PC-3 (cell line): ENCODE measurements at regions of chr15 and their contacts with region 1.

Region 1: DNA sequence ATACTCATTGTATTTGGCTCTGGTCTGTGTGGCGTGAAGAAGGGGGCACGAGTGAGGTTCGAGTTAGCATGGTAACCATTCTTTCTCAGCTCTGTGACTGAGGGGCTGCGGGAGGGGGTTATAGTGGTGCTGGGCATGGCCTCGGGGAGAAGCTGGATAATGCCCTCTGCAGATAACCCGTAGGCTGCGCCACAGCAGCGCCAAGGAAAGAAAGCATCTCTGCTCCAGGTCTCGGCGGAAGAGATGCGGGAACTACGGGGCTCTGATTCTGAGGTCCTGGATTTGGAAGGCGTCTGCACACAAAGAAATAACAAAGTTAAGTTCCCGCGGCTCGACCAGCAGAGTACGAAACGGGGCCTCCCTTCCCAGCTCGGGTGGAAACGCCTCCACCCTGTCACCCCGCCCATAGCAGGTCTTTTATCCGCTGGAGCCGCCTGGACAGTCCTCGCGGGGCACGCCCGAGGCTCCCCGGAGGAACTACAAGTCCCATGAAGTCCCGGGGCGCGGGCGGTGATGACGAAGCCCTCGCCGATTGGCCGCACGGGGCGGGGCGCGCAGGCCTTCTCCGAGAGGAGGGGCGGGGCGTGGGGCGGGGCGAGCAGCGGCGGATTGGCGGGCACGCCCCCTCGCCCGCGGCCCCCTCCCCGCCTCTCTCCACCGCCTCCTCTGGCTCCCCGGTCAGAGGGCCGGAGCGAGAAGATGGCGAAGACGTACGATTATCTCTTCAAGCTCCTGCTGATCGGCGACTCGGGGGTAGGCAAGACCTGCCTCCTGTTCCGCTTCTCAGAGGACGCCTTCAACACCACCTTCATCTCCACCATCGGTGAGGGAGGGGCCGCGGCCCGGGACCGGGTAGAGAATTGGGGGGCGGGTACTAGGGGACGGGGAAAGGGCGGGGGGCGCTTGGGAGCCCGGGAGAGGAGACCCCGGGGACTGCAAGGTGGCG is at the start of gene RAB8B:
- DNase-seq: peak; percentile 91
- ATAC-seq: peak; percentile 97
- H3K4me3 ChIP-seq: peak within 1 kb of the TSS; percentile 89
- H3K27ac ChIP-seq: no peak within 1 kb of the TSS
- H3K4me1 ChIP-seq: peaks cover 36% of the 10 kb centered on the region
- H3K27me3 ChIP-seq: no peaks in the 10 kb centered on the region
- CTCF ChIP-seq: no peak
- total RNA-seq, gene RAB8B: 6.2 and 8.5 TPM in 2 replicates

Region 2: DNA sequence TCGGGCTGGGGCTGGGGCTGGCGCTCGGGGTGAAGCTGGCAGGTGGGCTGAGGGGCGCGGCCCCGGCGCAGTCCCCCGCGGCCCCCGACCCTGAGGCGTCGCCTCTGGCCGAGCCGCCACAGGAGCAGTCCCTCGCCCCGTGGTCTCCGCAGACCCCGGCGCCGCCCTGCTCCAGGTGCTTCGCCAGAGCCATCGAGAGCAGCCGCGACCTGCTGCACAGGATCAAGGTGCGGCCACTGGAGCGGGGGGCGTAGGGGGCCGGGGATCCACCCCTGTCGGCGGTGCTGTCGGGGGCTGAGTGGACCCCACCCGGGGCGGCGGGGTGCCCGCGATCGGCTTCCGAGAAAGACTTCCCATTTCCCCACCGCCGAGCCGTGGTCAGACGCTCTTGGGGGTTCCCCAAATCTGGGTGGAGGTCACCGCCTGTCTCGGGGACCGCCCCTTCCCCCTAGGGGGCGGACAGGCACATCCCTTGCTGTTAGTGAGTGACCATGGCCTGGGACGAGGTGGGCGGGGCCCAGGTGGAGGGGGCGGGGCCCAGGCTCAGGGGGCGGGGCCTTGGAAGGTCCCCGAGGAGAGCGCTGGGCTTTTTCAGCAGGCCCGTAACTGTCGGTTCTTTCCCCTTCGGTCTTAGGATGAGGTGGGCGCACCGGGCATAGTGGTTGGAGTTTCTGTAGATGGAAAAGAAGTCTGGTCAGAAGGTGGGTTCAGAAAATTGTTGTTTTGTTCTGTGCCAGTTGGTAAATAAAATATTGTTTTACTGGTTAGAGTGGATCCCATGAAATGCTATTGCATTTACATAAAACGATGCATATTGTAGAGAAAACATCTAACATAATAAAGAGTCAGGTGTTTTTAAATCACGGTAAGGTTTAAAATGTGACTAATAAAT is 67.0 kb before region 1 on chr15:
- CTCF ChIA-PET with region 1: no interaction called
- POLR2A ChIA-PET with region 1: no interaction called
- intact Hi-C with region 1: loop called (anchors 10 kb)
- DNase-seq: peak; percentile 65
- ATAC-seq: peak; percentile 94
- H3K4me3 ChIP-seq: peak overlapping the region; percentile 91
- H3K27ac ChIP-seq: no peak overlapping the region
- H3K4me1 ChIP-seq: no peaks in the 10 kb centered on the region
- H3K27me3 ChIP-seq: no peaks in the 10 kb centered on the region
- CTCF ChIP-seq: peak; percentile 23; the same call in 1 of the 2 replicates

Region 3: DNA sequence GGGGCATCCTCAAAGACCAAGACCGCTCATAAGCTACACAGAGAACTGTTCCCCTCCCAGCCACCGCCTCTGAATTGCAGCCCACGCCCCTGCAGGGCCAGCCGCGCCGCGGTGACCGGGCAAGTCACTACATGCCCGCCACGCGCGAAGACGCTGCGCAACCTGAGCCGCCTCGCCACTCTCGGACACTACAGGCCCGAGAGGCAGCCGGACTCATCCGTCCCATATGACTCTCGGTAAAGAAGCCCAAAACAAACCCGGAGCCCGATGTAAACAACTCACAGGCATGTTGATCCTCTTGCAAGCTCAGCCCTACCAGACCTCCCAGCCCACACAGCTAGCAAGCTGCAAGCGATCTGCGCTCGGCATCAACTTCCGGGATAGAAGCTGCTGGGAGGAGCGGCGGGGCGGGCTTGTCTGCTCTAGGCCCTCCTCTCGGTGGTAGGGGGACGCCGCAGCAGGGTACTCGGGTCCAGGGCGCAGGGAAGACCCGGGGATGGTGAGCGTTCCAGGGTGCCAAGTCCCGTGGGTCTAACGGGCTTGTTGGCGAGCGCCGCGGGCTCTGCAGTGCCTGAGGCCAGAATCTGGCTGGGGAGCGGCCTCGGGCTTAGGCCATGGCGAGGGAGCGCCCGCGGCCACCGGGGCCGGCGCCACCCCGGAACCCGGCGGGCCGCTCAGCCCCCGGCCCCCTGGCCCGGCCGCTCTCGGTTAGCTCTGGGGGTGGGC is 31.9 kb before region 1 on chr15 and contains the start of gene RPS27L:
- CTCF ChIA-PET with region 1: no interaction called
- POLR2A ChIA-PET with region 1: no interaction called
- intact Hi-C with region 1: loop called (anchors 5 kb)
- DNase-seq: peak; percentile 82
- ATAC-seq: peak; percentile 91
- H3K4me3 ChIP-seq: peak within 1 kb of the TSS; percentile 84
- H3K27ac ChIP-seq: peak within 1 kb of the TSS; percentile 51
- H3K4me1 ChIP-seq: peaks cover 13% of the 10 kb centered on the region
- H3K27me3 ChIP-seq: no peaks in the 10 kb centered on the region
- CTCF ChIP-seq: no peak
- total RNA-seq, gene RPS27L: 33.9 and 48.5 TPM in 2 replicates

Region 4: DNA sequence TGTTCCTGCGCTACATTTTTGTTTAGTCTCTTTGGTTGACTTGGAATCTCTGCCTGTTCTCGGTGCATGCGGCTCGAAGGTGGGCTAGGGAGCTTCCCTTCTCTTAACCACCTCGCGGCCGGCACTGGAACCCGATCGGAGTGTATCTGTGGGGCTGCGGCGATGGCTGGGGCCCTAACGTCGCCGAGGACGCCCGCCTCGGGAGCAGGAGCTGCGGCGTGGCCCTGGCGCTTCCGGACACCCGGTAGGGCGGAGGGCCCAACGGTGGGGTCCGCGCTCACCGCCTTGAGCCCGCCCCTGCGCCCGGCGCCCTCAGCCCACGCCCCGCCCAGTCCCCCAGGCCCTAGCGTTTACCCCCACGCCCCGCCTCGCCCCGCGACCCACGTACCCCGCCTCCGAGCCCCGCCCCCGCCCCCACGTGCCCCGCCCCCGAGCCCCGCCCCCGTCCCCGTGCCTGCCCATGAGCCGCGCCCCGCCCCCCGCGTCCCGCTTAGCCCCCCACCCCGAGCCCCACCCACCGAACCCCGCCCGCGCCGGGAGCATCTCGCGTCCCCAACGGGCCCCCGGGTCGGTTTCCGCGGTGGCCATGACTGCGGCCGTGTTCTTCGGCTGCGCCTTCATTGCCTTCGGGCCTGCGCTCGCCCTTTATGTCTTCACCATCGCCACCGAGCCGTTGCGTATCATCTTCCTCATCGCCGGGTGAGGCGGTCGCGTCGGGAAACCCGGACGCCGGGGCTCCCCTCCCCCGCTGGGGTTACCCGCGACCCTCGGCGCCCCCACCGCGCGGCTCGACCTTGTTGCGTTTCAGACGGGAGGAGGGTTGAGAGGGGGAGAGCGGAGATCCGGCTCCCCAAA is 88.1 kb after region 1 on chr15 and contains the start of gene APH1B:
- CTCF ChIA-PET with region 1: interaction called, 5 read pairs
- POLR2A ChIA-PET with region 1: no interaction called
- intact Hi-C with region 1: loop called (anchors 1 kb)
- DNase-seq: peak; percentile 56
- ATAC-seq: peak; percentile 88
- H3K4me3 ChIP-seq: peak within 1 kb of the TSS; percentile 94
- H3K27ac ChIP-seq: 0 out of 2 replicates have a peak within 1 kb of the TSS, but pooled peaks have one; percentile 16
- H3K4me1 ChIP-seq: no peaks in the 10 kb centered on the region
- H3K27me3 ChIP-seq: no peaks in the 10 kb centered on the region
- CTCF ChIP-seq: no peak
- total RNA-seq, gene APH1B: 2.6 and 2.8 TPM in 2 replicates